ENCODE measurements at regions of chr9 and their contacts with region 1.

Region 1: DNA sequence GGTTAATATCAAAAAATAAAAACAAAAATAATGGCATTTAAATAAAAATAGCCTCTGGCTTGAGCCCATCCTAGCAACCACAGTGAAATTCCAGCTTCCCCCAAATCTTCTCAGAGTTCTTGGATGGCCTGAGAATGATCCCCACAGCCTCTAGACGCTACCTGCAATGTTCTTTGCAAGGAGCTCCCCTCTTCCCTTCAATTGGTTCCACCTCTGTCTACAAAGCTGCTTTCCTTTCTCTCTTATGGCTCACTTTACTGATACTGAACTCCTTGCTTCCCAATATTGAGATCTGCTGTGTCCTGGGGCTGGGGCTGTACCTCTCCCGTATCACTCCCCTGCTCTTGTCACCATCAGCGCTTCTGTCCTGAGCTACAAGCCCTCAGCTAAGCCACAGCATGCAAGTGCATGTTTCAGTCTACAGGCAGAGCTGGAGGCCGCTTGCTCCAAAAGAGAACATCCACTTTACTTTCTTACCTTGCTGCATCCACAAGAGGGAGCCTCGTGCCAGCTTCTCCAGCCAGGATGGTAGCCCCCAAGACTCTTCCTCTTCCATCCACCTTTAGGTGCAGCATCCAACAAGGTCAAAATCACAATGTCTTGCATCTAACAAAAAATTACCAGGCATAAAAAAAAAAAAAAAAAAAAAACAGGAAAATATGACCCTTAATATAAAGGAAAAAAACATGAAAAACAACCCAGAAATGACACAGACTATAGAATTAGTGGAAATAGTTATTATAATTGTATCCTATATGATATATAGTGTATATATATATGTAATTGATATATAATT is 57.4 kb upstream of the PRSS3 start:
- DNase-seq: peak; percentile 69
- H3K4me3 Mint-ChIP-seq: no peak overlapping the region
- H3K27ac Mint-ChIP-seq: no peak overlapping the region
- H3K4me1 Mint-ChIP-seq: no peaks in the 10 kb centered on the region
- H3K27me3 Mint-ChIP-seq: peaks cover 38% of the 10 kb centered on the region

Region 2: DNA sequence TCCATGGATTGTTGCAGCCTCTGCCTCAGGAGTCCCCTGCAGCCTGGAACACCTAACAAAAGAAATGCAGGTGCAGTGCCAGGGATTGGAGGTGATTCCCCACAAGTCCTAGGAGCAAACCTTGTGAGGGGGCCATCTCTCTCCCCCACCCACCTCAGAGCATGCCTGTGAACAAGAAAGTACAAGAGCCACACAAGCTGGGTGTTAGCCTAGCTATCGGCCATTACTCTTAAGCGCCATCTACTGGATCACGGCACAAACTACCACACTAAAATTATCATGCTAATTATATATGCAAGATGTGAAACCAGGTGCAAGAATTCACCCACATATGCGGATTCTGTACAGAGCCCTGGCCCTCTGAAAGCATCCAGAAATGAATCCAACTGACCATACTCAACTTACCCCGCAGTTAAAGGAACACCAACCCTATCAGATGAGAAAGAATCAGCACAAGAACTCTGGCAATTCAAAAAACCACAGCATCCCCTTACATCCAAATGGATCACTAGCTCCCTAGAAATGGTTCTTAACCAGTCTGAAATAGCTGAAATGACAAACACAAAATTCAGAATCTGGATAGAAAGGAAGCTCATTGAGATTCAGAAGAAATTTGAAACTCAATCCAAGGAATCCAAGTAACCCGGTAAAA is 40.8 kb after region 1 on chr9:
- intact Hi-C with region 1: loop called (anchors 2 kb)
- DNase-seq: peak; percentile 86
- H3K4me3 Mint-ChIP-seq: no peak overlapping the region
- H3K27ac Mint-ChIP-seq: no peak overlapping the region
- H3K4me1 Mint-ChIP-seq: peaks cover 5% of the 10 kb centered on the region
- H3K27me3 Mint-ChIP-seq: peaks cover 33% of the 10 kb centered on the region

Measured in activated CD4-positive, alpha-beta T cell treated with anti-CD3 and anti-CD28 coated beads, Interleukin-2, amount 10 ng/mL, durations not matched to agents 24 days and 14 days (primary cell).